ENCODE measurements at regions of chr19 and their contacts with region 1.

Region 1: DNA sequence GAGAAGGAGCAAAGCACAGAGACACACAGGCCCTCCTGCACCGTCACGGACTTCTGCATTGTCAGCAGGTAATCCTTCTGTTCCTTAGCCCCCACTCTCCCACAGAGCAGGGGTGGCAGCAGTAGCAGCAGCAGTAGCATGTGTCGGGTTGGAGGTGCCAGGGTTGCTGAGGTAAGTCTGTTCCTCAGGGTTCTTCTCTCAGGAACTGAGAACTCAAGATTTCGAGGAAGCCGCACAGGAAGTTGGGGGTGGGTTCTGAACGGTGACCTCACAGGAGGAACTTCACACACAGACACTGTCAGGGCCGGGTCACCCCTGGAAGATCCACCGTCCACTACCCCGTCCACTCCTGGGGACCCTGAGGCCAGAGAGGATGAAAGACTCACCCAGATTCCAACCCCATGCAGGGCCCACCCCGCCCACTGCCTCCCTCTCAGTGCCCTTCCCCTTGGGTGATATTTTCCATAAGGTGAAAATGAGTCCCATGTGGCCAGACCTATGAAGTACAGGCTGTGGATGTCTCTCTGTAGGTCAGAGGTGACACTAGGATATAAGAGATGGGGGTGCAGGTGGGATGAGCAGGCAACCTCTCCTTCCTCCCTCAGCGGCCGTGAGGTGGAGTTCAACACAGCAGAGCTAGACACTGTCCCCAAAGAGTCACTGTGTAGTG is at the start of gene SIGLEC12:
- DNase-seq: peak; percentile 23
- H3K4me3 Mint-ChIP-seq: peak within 1 kb of the TSS; percentile 82
- H3K27ac Mint-ChIP-seq: peak within 1 kb of the TSS; percentile 88
- H3K4me1 Mint-ChIP-seq: peaks cover 36% of the 10 kb centered on the region
- H3K27me3 Mint-ChIP-seq: no peaks in the 10 kb centered on the region
- total RNA-seq, gene SIGLEC12: 4.5 and 4.6 TPM in 2 replicates

Region 2: GRCh38 chr19:51489113-51489512 is 12.6 kb before region 1 on chr19:
- intact Hi-C with region 1: loop called (anchors 1 kb)
- DNase-seq: no peak
- H3K4me3 Mint-ChIP-seq: peak overlapping the region; percentile 3
- H3K27ac Mint-ChIP-seq: peak overlapping the region; percentile 82
- H3K4me1 Mint-ChIP-seq: peaks cover 25% of the 10 kb centered on the region
- H3K27me3 Mint-ChIP-seq: no peaks in the 10 kb centered on the region

Measured in activated T-helper 2 cell treated with anti-CD3 and anti-CD28 coated beads, Interferon-gamma antibody, Interleukin-2, Interleukin-4, amounts not matched to agents 10 μg/mL and 5 μg/mL and 100 μg/mL, durations not matched to agents 14 hours and 24 hours and 36 hours (primary cell).